Activated naive CD4-positive, alpha-beta T cell treated with anti-CD3 and anti-CD28 coated beads for 36 hours (primary cell): ENCODE measurements at regions of chr15 and their contacts with region 1.

Region 1: GRCh38 chr15:34101366-34102175 is at the starts of genes EMC7 and PGBD4:
- DNase-seq: peak; percentile 100
- H3K4me3 Mint-ChIP-seq: peak within 1 kb of the TSS; percentile 99
- H3K27ac Mint-ChIP-seq: peak within 1 kb of the TSS; percentile 96
- H3K4me1 Mint-ChIP-seq: peaks cover 28% of the 10 kb centered on the region
- H3K27me3 Mint-ChIP-seq: no peaks in the 10 kb centered on the region
- total RNA-seq, gene EMC7: 51.8 to 56.2 TPM
- total RNA-seq, gene PGBD4: 2.0 TPM

Region 2: DNA sequence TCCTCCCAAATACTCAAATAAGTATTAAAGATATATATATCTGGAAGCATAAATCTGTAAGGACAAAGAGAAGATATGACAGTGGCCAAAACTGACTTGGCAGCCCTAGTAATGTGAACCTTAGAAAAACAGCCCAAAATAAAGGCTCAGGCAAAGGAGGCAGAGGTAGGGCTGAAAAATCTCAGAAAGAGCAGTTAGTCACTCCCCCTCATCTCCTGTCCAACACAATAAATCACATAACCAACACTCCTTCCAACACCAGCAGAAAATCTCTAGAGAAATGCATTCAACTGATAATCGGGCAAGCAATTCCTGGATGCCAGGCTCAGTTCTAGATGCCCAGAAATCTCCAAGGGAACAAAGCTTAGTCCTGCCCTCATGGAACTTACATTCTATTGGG is 155.4 kb before region 1 on chr15:
- CTCF ChIA-PET with region 1: no interaction called
- intact Hi-C with region 1: no loop called
- DNase-seq: no peak
- H3K4me3 Mint-ChIP-seq: no peak overlapping the region
- H3K27ac Mint-ChIP-seq: no peak overlapping the region
- H3K4me1 Mint-ChIP-seq: peaks cover 1% of the 10 kb centered on the region
- H3K27me3 Mint-ChIP-seq: no peaks in the 10 kb centered on the region

Region 3: DNA sequence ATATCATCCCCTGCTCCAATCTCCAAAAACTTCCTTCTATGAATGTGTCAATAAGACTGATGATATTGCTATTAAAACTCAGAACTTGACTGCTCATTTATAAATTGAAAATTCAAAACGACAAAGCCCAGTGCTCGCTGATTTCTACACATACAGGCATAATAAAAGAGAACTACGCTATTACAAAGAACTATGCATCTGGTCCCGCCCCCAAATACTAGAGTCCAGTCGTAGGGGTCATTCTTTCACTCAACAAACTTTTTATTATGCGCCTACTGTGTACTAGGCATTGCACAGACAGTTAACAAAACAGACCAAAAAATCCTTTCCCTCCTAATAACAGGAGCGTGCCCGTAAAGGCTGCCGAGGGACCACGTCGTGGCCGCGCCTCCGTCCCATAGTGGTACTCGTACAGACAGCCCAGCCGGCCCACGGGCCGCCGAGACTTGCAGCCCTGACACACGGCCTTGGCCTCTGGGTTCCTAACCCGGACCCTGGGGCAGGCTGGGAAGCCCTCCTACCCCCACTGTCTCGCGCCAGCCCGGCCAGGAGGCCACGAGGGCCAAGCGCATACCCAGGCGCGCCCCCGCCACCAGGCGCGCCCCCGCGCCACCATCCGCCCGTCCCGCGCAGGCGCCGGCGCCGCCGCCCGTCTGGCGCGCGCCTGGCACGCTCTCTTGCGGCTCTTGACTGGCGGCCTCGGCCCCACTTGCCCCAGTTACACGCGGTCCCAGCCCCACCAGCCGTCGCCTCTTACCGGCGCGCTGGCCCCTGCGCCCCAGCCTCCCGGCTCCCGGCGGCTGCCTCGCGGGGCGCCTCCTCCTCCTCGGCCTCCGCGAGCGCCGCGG is 63.3 kb before region 1 on chr15:
- CTCF ChIA-PET with region 1: no interaction called
- intact Hi-C with region 1: loop called (anchors 1 kb)
- DNase-seq: peak; percentile 70
- H3K4me3 Mint-ChIP-seq: peak overlapping the region; percentile 92
- H3K27ac Mint-ChIP-seq: peak overlapping the region; percentile 92
- H3K4me1 Mint-ChIP-seq: peaks cover 17% of the 10 kb centered on the region
- H3K27me3 Mint-ChIP-seq: no peaks in the 10 kb centered on the region

Region 4: GRCh38 chr15:34223904-34224596 is 122.5 kb after region 1 on chr15:
- CTCF ChIA-PET with region 1: interaction called, 3 read pairs
- intact Hi-C with region 1: loop called (anchors 1 kb)
- DNase-seq: no peak
- H3K4me3 Mint-ChIP-seq: peak overlapping the region; percentile 96
- H3K27ac Mint-ChIP-seq: peak overlapping the region; percentile 97
- H3K4me1 Mint-ChIP-seq: peaks cover 31% of the 10 kb centered on the region
- H3K27me3 Mint-ChIP-seq: no peaks in the 10 kb centered on the region

Region 5: DNA sequence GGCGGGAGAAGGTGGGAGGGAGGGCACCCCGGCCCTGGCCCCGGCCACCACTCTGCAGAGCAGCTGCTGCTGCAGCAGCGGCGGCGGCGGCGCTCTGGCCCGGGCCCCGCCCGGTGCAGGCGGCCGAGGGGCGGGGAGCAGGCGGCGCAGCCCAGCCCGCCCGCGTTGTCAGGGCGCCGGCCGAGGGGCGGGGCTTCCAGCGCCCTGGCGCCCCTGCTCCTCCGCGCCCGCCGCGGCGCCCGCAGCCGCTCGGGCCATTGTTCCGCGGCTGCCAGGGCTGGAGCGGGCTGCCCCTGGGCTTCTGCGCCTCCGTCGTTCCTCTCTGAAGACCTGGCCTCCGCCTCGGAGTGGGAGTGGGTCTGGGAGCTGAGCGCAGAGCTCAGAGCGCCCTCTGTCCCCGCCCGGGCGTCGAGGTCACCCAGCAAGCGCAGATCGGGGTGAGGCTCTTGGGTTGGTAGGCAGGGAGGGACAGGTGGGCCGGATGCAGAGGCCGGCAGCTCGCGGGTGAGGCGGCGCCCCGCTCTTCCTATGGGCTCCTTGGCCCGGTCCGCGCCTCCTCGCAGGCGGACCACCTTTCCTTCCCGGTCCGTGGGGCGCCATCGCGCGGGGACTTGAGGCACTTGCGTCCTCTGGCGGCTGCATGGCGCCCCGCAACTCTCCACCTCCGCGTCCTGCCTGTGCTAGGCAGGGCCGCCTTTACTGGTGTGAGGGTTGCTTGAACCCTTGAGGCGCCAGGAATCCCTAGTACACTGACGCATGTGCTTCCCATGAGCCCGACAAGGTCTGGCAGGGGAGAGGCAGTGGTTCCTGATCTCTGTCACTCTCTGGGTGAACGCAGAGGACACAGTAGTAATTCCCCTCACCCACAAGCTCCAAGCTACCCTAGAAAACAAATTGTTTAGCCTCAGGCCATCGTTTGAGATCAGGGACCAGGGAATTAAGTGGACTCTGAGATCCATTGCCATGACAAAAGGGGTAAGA is 265.8 kb after region 1 on chr15 and contains the start of gene LPCAT4:
- CTCF ChIA-PET with region 1: no interaction called
- intact Hi-C with region 1: loop called (anchors 1 kb)
- DNase-seq: peak; percentile 91
- H3K4me3 Mint-ChIP-seq: peak within 1 kb of the TSS; percentile 97
- H3K27ac Mint-ChIP-seq: peak within 1 kb of the TSS; percentile 96
- H3K4me1 Mint-ChIP-seq: peaks cover 36% of the 10 kb centered on the region
- H3K27me3 Mint-ChIP-seq: no peaks in the 10 kb centered on the region
- total RNA-seq, gene LPCAT4: 63.5 to 66.8 TPM

Region 6: GRCh38 chr15:34969340-34970097 is 867.9 kb after region 1 on chr15 and contains the start of gene AQR:
- CTCF ChIA-PET with region 1: no interaction called
- intact Hi-C with region 1: loop called (anchors 5 kb)
- DNase-seq: peak; percentile 97
- H3K4me3 Mint-ChIP-seq: peak within 1 kb of the TSS; percentile 99
- H3K27ac Mint-ChIP-seq: peak within 1 kb of the TSS; percentile 93
- H3K4me1 Mint-ChIP-seq: peaks cover 40% of the 10 kb centered on the region
- H3K27me3 Mint-ChIP-seq: no peaks in the 10 kb centered on the region
- total RNA-seq, gene AQR: 30.8 to 31.3 TPM

Region 7: DNA sequence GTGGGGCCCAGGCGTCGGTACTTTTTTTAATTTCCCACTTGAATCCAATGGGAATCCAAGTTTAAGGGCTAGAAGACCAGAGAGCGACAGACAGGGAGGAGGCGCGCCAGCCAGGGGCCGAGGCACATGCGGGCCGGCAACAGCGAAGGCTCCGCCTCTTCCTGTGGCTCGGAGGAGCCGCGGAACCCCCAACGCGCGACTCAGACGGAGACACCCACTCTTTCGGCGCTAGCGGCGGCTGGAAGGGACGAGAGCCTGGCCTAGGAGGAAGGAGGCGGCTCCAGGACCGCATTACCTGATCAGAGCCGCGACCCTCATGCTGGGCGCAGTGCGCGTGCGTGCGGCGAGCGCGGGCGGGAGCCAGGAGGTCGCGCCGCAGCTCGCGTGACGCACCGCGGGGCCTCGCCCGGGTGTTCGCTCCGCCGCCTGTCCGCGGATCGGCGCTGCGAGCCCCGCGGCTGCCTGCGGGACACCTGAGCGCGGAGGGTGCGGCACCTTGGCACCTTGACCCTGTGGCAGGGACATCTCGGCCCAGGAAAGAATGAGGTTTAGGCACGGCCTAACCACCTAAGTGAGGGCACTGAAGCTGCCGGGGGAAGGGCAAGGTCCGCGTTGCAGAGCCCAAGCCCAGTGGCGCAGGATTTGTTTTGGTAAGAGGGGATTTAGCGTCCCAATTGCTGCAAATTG is 1444.4 kb after region 1 on chr15 and contains the start of gene DPH6:
- CTCF ChIA-PET with region 1: no interaction called
- intact Hi-C with region 1: loop called (anchors 5 kb)
- DNase-seq: peak; percentile 77
- H3K4me3 Mint-ChIP-seq: peak within 1 kb of the TSS; percentile 98
- H3K27ac Mint-ChIP-seq: peak within 1 kb of the TSS; percentile 97
- H3K4me1 Mint-ChIP-seq: peaks cover 28% of the 10 kb centered on the region
- H3K27me3 Mint-ChIP-seq: no peaks in the 10 kb centered on the region
- total RNA-seq, gene DPH6: 20.0 to 20.5 TPM